Right ventricle myocardium superior (tissue), 1 donor: ENCODE measurements at regions of chr7 and their contacts with region 1.

Region 1: GRCh38 chr7:37833107-37833817 is 15.1 kb upstream of the NME8 start:
- DNase-seq: peak; percentile 48
- ATAC-seq: peak; percentile 46

Region 2: DNA sequence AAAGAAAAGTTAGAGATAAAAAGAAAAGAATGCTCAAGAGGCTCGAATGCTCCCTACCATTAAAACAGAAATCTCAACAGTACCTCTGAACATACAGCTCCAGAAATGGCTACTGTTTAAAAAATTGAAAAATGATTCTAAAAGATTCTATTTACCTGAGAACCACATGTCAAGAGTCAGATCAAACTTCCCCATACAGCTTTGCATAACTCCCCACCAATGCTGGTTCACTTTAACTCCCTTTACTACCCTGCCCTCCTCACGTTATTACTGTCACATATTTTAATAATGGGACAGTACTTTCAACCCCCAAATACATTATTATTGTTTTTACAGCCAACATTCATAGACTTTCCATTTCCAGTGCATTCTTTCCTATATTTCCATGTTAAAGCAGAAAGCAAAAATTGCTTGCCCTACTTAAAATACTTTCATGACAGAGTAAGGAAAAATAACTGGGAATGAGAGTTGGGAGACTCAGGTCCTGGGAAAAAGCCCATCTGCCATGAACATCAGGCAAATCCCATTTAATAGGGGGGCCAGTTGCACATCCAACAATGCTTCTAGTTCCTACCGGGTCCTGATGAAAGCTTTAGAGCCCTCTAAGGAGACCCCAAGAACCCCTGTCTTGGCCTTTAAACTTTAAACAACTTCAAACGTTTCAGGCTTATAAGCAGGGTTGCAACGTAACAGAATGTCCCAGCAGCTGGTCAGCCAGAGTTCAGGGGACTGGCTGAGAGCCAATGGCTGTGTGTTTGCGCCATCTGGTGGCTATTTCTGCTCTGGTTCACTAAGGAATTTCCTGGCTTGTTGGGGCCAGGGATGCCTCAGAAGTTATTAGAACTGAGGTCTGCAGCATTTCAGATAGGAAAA is 632.0 kb before region 1 on chr7:
- intact Hi-C with region 1: loop called (anchors 10 kb)
- DNase-seq: peak; percentile 84
- ATAC-seq: peak; percentile 91

Region 3: DNA sequence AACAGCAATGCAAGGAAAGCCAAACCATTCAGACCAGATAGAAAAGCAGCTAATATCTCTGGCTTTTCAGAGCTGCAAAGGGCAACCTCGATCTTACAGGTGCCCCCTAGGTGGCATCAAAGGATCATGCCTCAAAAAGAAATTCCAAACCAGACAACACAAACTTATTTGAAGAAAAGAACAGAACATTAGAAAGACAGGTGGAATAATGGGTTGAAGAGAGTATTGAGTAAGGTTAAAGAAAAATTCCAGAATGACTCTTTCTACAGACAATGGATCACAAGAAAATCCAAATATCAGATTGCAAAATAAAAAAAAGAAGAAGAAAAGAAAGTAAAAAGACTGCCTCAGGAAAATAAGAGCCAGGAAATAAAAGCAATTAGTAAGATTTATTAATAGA is 598.3 kb before region 1 on chr7:
- intact Hi-C with region 1: loop called (anchors 10 kb)
- DNase-seq: no peak
- ATAC-seq: no peak

Region 4: DNA sequence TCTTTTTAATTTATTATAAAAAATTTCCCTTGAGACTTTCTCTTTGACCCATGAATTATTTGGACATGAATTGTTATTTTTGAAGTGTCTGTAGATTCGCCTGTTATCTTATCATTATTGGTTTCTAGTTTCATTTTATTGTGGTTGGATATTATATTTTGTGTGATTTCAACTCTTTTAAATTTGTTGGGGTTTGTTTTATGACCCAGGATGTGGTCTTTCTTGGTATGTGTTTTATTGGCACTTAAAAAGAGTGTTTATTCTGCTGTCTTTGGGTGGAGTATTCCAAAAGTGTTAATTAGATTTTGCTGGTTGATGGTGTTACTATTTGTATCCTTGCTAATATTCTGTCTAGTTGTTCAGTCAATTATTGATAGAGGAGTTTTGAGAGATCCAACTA is 200.2 kb before region 1 on chr7:
- intact Hi-C with region 1: loop called (anchors 5 kb)
- DNase-seq: no peak
- ATAC-seq: no peak

Region 5: DNA sequence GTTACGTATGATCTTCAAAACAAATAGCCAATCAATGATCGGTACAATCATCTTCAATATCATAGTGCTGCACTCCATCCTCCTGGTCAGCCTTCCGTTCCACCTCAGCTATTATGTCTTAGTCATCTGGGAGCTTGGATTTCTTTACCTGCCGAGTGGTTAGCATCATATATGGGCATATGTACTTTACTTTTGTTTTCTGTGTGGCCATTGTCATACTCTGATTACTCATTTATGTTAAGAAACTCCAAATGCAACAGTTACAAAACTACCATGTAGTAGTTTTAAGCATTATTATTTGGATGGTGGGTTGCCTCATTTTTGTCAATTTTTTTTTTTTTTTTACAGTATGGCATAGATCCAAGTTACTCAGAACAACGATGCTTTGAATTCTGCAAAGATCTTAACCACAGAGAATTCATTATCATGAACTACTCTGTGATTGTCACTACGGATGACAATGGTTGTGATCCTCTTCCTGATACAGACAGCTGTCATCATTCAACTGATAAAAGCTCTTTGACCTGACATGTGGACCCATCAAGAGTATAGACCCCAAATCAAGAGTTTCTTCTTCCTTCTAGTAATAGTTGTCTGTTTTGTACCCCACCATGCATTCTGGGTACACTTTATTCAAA is 37.0 kb before region 1 on chr7:
- intact Hi-C with region 1: no loop called
- DNase-seq: no peak
- ATAC-seq: no peak